ENCODE measurements at regions of chr7 and their contacts with region 1.

Region 1: DNA sequence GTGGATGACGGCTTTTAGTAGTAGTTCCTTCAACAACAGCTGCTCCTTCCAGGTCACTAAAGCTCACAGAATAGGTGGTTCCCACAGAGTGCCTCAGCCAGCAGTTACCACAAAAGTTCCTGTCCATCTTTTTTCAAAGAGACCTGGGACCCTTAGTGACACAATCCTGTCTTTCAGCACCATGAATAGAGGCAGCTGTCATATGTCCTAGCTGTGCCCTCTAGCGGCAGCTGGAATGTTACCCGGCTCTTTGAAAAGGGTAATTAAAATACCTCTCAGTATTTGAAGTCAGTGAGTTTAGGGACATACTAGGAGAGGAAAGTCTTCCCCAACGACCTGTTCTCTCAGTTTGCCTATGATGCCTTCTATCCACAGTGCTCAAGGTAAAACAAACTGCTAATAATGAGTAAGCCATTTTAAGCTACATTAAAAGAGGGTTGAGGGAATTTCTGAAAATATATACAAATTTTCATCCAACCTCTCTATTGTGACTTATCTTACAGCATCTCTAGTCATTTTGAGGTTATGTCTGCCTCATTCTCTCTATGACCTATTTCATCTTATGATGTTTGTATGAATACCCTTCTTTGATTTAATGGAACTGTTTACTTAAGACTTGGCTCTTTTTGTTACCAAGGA is 290.8 kb downstream of the NXPH1 start:
- DNase-seq: peak; percentile 74
- H3K4me3 Mint-ChIP-seq: no peak overlapping the region
- H3K27ac Mint-ChIP-seq: no peak overlapping the region
- H3K4me1 Mint-ChIP-seq: no peaks in the 10 kb centered on the region
- H3K27me3 Mint-ChIP-seq: no peaks in the 10 kb centered on the region
- CTCF ChIP-seq: peak; percentile 86

Region 2: DNA sequence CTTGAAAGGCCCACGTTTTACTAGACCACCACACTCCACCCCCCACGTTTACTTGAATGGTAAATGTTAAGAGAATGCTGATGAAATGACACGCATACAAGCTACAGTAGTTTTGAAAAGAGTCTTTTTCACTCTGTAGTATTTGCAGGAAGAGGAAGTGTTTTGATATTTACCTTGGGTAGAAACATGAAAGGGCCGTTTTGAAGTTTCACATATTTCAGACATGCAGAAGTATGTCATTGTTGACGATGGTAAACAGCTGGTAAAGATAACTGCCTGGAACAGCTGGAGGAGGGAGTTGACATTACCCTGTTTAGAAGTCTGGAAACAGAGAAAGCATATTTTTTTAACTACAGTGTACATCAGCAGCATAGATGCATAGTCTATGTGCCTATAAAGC is 130.1 kb before region 1 on chr7:
- CTCF ChIA-PET with region 1: no interaction called
- intact Hi-C with region 1: loop called (anchors 10 kb)
- DNase-seq: no peak
- H3K4me3 Mint-ChIP-seq: no peak overlapping the region
- H3K27ac Mint-ChIP-seq: peak overlapping the region; percentile 45
- H3K4me1 Mint-ChIP-seq: peaks cover 23% of the 10 kb centered on the region
- H3K27me3 Mint-ChIP-seq: no peaks in the 10 kb centered on the region
- CTCF ChIP-seq: no peak

Measured in Calu3 (cell line).